Activated CD8-positive, alpha-beta memory T cell treated with anti-CD3 and anti-CD28 coated beads, Interleukin-2, amount 10 ng/mL, durations not matched to agents 7 days and 5 days (primary cell): ENCODE measurements at regions of chr2 and their contacts with region 1.

Region 1: GRCh38 chr2:28392297-28393113 is at the start of gene FOSL2:
- DNase-seq: peak; percentile 97
- ATAC-seq: peak; percentile 78
- H3K4me3 Mint-ChIP-seq: peak within 1 kb of the TSS; percentile 87
- H3K27ac Mint-ChIP-seq: peak within 1 kb of the TSS; percentile 96
- H3K4me1 Mint-ChIP-seq: peaks cover 28% of the 10 kb centered on the region
- H3K27me3 Mint-ChIP-seq: no peaks in the 10 kb centered on the region
- total RNA-seq, gene FOSL2: 56.2 to 75.7 TPM

Region 2: GRCh38 chr2:28359222-28360065 is 33.1 kb before region 1 on chr2:
- CTCF ChIA-PET with region 1: interaction called, 11 read pairs
- DNase-seq: peak; percentile 96
- ATAC-seq: peak; percentile 81
- H3K4me3 Mint-ChIP-seq: peak overlapping the region; percentile 44
- H3K27ac Mint-ChIP-seq: peak overlapping the region; percentile 94
- H3K4me1 Mint-ChIP-seq: peaks cover 56% of the 10 kb centered on the region
- H3K27me3 Mint-ChIP-seq: no peaks in the 10 kb centered on the region

Region 3: GRCh38 chr2:28408764-28409599 is 16.5 kb after region 1 on chr2:
- CTCF ChIA-PET with region 1: interaction called, 14 read pairs
- DNase-seq: peak; percentile 94
- ATAC-seq: peak; percentile 74
- H3K4me3 Mint-ChIP-seq: peak overlapping the region; percentile 19
- H3K27ac Mint-ChIP-seq: peak overlapping the region; percentile 98
- H3K4me1 Mint-ChIP-seq: peaks cover 77% of the 10 kb centered on the region
- H3K27me3 Mint-ChIP-seq: no peaks in the 10 kb centered on the region

Region 4: GRCh38 chr2:28424799-28425463 is 32.4 kb after region 1 on chr2:
- CTCF ChIA-PET with region 1: no interaction called
- DNase-seq: peak; percentile 70
- ATAC-seq: peak; percentile 54
- H3K4me3 Mint-ChIP-seq: peak overlapping the region; percentile 54
- H3K27ac Mint-ChIP-seq: peak overlapping the region; percentile 93
- H3K4me1 Mint-ChIP-seq: peaks cover 77% of the 10 kb centered on the region
- H3K27me3 Mint-ChIP-seq: no peaks in the 10 kb centered on the region

Region 5: GRCh38 chr2:28469304-28469703 is 76.8 kb after region 1 on chr2:
- CTCF ChIA-PET with region 1: no interaction called
- DNase-seq: no peak
- ATAC-seq: no peak
- H3K4me3 Mint-ChIP-seq: no peak overlapping the region
- H3K27ac Mint-ChIP-seq: no peak overlapping the region
- H3K4me1 Mint-ChIP-seq: peaks cover 43% of the 10 kb centered on the region
- H3K27me3 Mint-ChIP-seq: peaks cover 3% of the 10 kb centered on the region